MCF 10A (cell line): ENCODE measurements at regions of chr7 and their contacts with region 1.

Region 1: GRCh38 chr7:12458520-12459131 is 55.0 kb upstream of the VWDE start:
- DNase-seq: peak; percentile 62
- H3K4me3 Mint-ChIP-seq: no peak overlapping the region
- H3K27ac Mint-ChIP-seq: no peak overlapping the region
- H3K4me1 Mint-ChIP-seq: no peaks in the 10 kb centered on the region
- H3K27me3 Mint-ChIP-seq: no peaks in the 10 kb centered on the region
- CTCF ChIP-seq: peak; percentile 72

Region 2: GRCh38 chr7:12389089-12389700 is 69.4 kb before region 1 on chr7:
- CTCF ChIA-PET with region 1: interaction called, 7 read pairs
- POLR2A ChIA-PET with region 1: no interaction called
- intact Hi-C with region 1: loop called (anchors 2 kb)
- DNase-seq: peak; percentile 72
- H3K4me3 Mint-ChIP-seq: no peak overlapping the region
- H3K27ac Mint-ChIP-seq: no peak overlapping the region
- H3K4me1 Mint-ChIP-seq: no peaks in the 10 kb centered on the region
- H3K27me3 Mint-ChIP-seq: no peaks in the 10 kb centered on the region
- CTCF ChIP-seq: peak; percentile 84

Region 3: DNA sequence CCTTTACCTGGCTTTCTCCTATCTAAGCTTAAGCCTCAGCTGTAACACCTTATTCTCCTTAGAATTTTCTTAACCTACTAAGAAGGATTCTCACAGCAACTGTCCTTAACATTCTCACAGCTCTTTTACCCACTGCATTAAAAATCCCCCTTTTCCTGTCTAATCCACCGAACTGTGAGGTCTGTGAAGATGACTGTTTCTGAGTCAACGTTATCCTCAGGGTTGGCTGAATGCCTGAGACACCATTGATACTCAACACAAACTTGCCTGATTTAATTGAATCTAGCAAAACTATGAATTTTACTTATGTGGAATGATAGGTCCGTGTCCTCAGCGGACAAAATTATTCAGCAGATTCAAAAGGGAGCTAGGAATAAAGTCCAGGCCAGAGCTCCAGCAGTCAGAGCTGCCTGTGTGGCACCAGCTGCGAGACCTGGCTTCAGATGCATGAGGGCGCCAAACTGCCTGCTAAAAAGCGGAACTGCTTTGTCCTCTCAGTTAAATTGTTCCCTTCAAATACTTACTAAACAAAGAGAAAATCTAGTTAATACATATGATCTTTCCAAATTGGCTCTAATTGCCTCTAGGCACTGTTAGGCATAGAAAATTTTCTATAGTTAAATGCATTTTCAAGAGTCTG is 21.6 kb before region 1 on chr7:
- CTCF ChIA-PET with region 1: interaction called, 44 read pairs
- POLR2A ChIA-PET with region 1: no interaction called
- intact Hi-C with region 1: no loop called
- DNase-seq: peak; percentile 26
- H3K4me3 Mint-ChIP-seq: no peak overlapping the region
- H3K27ac Mint-ChIP-seq: no peak overlapping the region
- H3K4me1 Mint-ChIP-seq: peaks cover 9% of the 10 kb centered on the region
- H3K27me3 Mint-ChIP-seq: peaks cover 10% of the 10 kb centered on the region
- CTCF ChIP-seq: no peak

Region 4: DNA sequence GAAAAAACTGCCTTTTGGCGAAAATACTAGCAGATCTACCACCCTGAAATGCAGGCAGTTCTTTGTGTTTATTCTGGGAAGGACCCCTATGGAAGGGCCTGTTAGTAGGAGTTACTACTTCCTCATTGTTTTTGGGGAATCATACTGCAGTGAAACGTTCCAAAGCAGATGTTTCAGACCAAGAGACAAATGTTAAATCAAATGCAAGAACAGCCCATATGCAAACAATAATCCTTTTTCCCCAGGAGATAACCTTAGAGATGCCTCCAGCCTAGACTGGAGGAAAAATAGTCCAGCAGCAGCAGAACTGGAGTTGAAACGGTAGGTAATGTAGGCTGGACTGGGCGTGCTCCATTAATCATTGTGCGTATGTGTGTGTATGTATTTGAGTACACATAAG is 10.9 kb after region 1 on chr7:
- CTCF ChIA-PET with region 1: interaction called, 46 read pairs
- POLR2A ChIA-PET with region 1: interaction called, 3 read pairs
- intact Hi-C with region 1: no loop called
- DNase-seq: no peak
- H3K4me3 Mint-ChIP-seq: no peak overlapping the region
- H3K27ac Mint-ChIP-seq: no peak overlapping the region
- H3K4me1 Mint-ChIP-seq: no peaks in the 10 kb centered on the region
- H3K27me3 Mint-ChIP-seq: no peaks in the 10 kb centered on the region
- CTCF ChIP-seq: no peak

Region 5: GRCh38 chr7:12481722-12482121 is 23.1 kb after region 1 on chr7:
- CTCF ChIA-PET with region 1: interaction called, 54 read pairs
- POLR2A ChIA-PET with region 1: interaction called, 3 read pairs
- intact Hi-C with region 1: no loop called
- DNase-seq: no peak
- H3K4me3 Mint-ChIP-seq: no peak overlapping the region
- H3K27ac Mint-ChIP-seq: no peak overlapping the region
- H3K4me1 Mint-ChIP-seq: no peaks in the 10 kb centered on the region
- H3K27me3 Mint-ChIP-seq: no peaks in the 10 kb centered on the region
- CTCF ChIP-seq: no peak

Region 6: DNA sequence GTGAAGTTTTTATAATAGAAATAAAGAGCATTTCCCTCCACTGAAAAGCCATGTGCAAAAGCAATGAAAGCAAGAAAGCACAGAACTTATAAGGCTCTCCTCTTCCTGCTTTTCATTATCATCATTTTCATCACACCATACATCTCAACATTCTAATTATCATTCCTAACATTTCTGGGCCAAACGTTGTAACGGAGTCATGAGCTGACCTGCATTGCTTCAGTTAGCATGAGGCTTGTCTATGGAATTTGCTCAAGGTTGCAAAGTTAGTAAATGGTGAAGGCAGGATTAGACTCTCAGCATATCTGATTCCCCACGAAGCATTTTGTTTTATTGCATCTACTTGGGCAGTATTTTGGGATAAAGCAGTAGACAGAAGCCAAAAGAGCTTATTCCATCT is 123.3 kb after region 1 on chr7:
- CTCF ChIA-PET with region 1: no interaction called
- POLR2A ChIA-PET with region 1: no interaction called
- intact Hi-C with region 1: no loop called
- DNase-seq: no peak
- H3K4me3 Mint-ChIP-seq: no peak overlapping the region
- H3K27ac Mint-ChIP-seq: no peak overlapping the region
- H3K4me1 Mint-ChIP-seq: no peaks in the 10 kb centered on the region
- H3K27me3 Mint-ChIP-seq: no peaks in the 10 kb centered on the region
- CTCF ChIP-seq: no peak